ENCODE measurements at regions of chr3 and their contacts with region 1.

Region 1: GRCh38 chr3:12287727-12288191 is 1.1 kb upstream of the PPARG start:
- DNase-seq: no peak
- H3K4me3 ChIP-seq: peak overlapping the region; percentile 55 to 57 (median 57)
- H3K27ac ChIP-seq: no peak overlapping the region
- H3K4me1 ChIP-seq: peaks cover 11% of the 10 kb centered on the region
- H3K27me3 ChIP-seq: peaks cover 9% of the 10 kb centered on the region
- CTCF ChIP-seq: no peak

Region 2: GRCh38 chr3:12484198-12484974 is 196.6 kb after region 1 on chr3 and contains the start of gene TSEN2:
- CTCF ChIA-PET with region 1: no interaction called
- dilution Hi-C with region 1: no loop called
- in situ Hi-C with region 1: no loop called
- intact Hi-C with region 1: loop called (anchors 5 kb)
- DNase-seq: peak; percentile 95
- H3K4me3 ChIP-seq: peak within 1 kb of the TSS; percentile 62 to 82 (median 79)
- H3K27ac ChIP-seq: peak within 1 kb of the TSS; percentile 38
- H3K4me1 ChIP-seq: peaks cover 19% of the 10 kb centered on the region
- H3K27me3 ChIP-seq: no peaks in the 10 kb centered on the region
- CTCF ChIP-seq: peak in 1 of 2 donors; percentile 38
- total RNA-seq, gene TSEN2: 16.0 to 24.6 TPM

Measured in mammary epithelial cell (primary cell).